T-cell (primary cell): ENCODE measurements at regions of chr17 and their contacts with region 1.

Region 1: GRCh38 chr17:59964482-59965328 is at the start of gene RNFT1:
- DNase-seq: peak; percentile 78 to 94 (median 86)
- ATAC-seq: peak; percentile 88 to 94 (median 90)
- H3K4me3 ChIP-seq: peak within 1 kb of the TSS; percentile 97 to 98
- H3K4me3 Mint-ChIP-seq: peak within 1 kb of the TSS; percentile 89 to 95 (median 92)
- H3K27ac ChIP-seq: peak within 1 kb of the TSS; percentile 86
- H3K27ac Mint-ChIP-seq: peak within 1 kb of the TSS; percentile 96 to 98
- H3K4me1 ChIP-seq: peaks cover 9 to 12% of the 10 kb centered on the region in 2 experiments
- H3K4me1 Mint-ChIP-seq: peaks cover 23 to 24% (median 24%) of the 10 kb centered on the region in 3 donors
- H3K27me3 ChIP-seq: no peaks in the 10 kb centered on the region
- H3K27me3 Mint-ChIP-seq: no peaks in the 10 kb centered on the region
- total RNA-seq, gene RNFT1: 26.2 to 35.8 (median 32.3) TPM

Region 2: GRCh38 chr17:59619293-59620063 is 345.2 kb before region 1 on chr17 and contains the start of gene CLTC:
- CTCF ChIA-PET with region 1: no interaction called
- POLR2A ChIA-PET with region 1: interaction called in 1 of 2 experiments, 18 read pairs
- DNase-seq: peak; percentile 81 to 96 (median 89)
- ATAC-seq: peak; percentile 86 to 90 (median 90)
- H3K4me3 ChIP-seq: peak within 1 kb of the TSS; percentile 92 to 99
- H3K4me3 Mint-ChIP-seq: peak within 1 kb of the TSS; percentile 83 to 98 (median 97)
- H3K27ac ChIP-seq: peak within 1 kb of the TSS; percentile 96
- H3K27ac Mint-ChIP-seq: peak within 1 kb of the TSS; percentile 99
- H3K4me1 ChIP-seq: peaks cover 19 to 29% of the 10 kb centered on the region in 2 experiments
- H3K4me1 Mint-ChIP-seq: peaks cover 45 to 59% (median 48%) of the 10 kb centered on the region in 3 donors
- H3K27me3 ChIP-seq: no peaks in the 10 kb centered on the region
- H3K27me3 Mint-ChIP-seq: no peaks in the 10 kb centered on the region
- total RNA-seq, gene CLTC: 70.3 to 98.7 (median 85.3) TPM

Region 3: DNA sequence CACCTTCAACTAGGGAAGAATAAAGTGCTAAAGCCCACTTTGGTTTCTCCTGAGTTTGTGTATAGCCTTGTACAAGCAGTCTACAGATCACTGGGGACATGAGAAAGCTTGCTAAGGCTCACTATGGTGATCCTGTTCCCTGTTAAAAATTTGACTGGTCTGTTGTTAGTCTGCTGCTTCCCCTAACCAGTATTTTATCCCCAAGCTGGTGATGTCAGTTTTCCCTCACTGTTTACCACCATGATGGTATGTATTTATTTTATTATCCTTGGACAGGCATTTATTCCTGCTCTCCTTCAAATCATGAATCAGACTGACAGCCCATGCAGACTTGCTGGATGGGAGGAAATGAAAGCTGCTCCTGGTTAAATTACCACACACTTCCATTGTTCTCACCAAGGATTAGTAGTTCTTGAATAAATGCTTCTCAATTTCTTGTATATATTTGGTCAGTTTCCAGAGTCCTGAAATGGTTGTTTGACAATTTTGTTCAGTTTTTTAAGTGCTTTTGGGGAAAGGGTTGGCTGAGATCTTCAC is 284.7 kb after region 1 on chr17:
- CTCF ChIA-PET with region 1: no interaction called
- POLR2A ChIA-PET with region 1: no interaction called
- DNase-seq: no peak
- ATAC-seq: no peak
- H3K4me3 ChIP-seq: no peak overlapping the region
- H3K4me3 Mint-ChIP-seq: no peak overlapping the region
- H3K27ac ChIP-seq: no peak overlapping the region
- H3K27ac Mint-ChIP-seq: no peak overlapping the region
- H3K4me1 ChIP-seq: no peaks in the 10 kb centered on the region
- H3K4me1 Mint-ChIP-seq: no peaks in the 10 kb centered on the region
- H3K27me3 ChIP-seq: no peaks in the 10 kb centered on the region
- H3K27me3 Mint-ChIP-seq: no peaks in the 10 kb centered on the region